ENCODE measurements at regions of chr1 and their contacts with region 1.

Region 1: GRCh38 chr1:26145041-26145959 is 13.6 kb upstream of the FAM110D start:
- DNase-seq: peak; percentile 88
- H3K4me3 ChIP-seq: no peak overlapping the region
- H3K27ac ChIP-seq: no peak overlapping the region
- H3K4me1 ChIP-seq: peaks cover 2 to 16% (median 6%) of the 10 kb centered on the region in 6 donors
- H3K27me3 ChIP-seq: peaks cover 0 to 4% (median 0%) of the 10 kb centered on the region in 7 donors
- CTCF ChIP-seq: peak; percentile 61 to 92 (median 80)
- POLR2A ChIP-seq: no peak

Region 2: DNA sequence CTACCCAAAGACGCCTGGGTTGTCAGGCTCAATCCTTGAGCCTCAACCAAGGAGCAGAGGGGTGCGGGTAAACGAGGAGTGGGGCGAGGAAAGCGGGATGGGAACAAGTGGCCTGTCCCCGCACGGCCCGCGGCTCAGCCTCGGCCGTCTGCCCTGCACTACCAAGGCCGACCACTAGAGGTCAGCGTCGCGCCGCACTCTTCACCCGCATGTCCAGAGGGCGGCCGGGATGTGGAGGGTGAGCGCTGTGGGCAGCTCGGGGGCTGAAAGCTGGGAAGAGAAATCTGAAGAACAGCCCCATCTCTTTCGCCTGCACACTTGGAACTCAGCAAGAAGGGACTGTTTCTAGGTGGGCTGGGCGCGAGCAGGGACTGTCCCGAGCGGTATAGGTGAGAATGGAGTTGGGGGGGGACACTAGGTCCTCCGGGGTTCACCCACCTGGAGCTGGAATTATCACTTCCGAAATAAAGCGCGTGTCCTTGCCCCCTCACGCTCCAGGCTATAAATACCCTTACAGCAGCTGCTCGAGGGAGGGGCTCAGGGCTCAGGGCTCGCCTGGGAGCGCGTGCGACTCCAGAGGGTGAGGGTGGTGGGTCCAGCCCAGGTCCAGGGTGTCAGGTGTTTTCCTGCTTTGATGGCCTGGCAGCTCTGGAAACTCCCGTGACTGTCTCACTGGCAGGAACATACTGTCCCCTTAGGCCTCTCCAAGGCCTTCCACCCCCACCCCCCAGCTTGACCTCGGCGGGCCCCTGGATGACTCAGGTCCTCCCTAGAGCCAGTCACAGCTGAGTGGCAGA is 109.1 kb before region 1 on chr1:
- intact Hi-C with region 1: loop called (anchors 10 kb)
- DNase-seq: peak; percentile 95
- H3K4me3 ChIP-seq: peak overlapping the region; percentile 69 to 97 (median 84)
- H3K27ac ChIP-seq: peak overlapping the region; percentile 80 to 92 (median 86)
- H3K4me1 ChIP-seq: peaks cover 6 to 22% (median 15%) of the 10 kb centered on the region in 6 donors
- H3K27me3 ChIP-seq: peaks cover 0 to 31% (median under 1%) of the 10 kb centered on the region in 7 donors
- CTCF ChIP-seq: peak; percentile 98 to 100 (median 99)
- POLR2A ChIP-seq: no peak

Region 3: DNA sequence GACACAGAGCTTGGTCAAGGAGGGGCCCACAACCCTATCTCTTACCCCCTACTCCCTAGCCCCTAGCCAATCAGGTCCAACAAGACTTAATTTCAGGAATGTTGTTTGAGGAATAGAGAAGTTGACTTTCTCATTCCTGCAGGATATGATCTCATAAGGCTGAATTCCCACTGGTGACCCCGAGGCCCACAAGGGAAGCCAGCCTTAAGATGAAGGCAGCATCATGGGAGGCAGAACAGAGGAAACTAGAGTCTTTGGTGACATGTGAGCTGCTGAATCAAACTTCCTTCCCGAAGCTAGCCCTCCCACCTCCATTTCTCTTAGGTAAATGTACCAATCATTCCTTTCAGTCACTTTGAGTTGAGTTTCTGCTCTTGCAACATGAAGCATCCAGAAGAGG is 42.8 kb before region 1 on chr1:
- intact Hi-C with region 1: loop called (anchors 2 kb)
- DNase-seq: no peak
- H3K4me3 ChIP-seq: no peak overlapping the region
- H3K27ac ChIP-seq: no peak overlapping the region
- H3K4me1 ChIP-seq: peaks cover 0 to 9% (median 2%) of the 10 kb centered on the region in 6 donors
- H3K27me3 ChIP-seq: no peaks in the 10 kb centered on the region
- CTCF ChIP-seq: no peak
- POLR2A ChIP-seq: no peak